Activated T-helper 2 cell treated with anti-CD3 and anti-CD28 coated beads, Interferon-gamma antibody, Interleukin-2, Interleukin-4, amounts not matched to agents 10 μg/mL and 5 μg/mL and 100 μg/mL, durations not matched to agents 14 hours and 24 hours and 36 hours (primary cell): ENCODE measurements at regions of chr1 and their contacts with region 1.

Region 1: GRCh38 chr1:246329900-246330299 is 177.2 kb downstream of the SMYD3 start:
- DNase-seq: peak; percentile 28
- H3K4me3 Mint-ChIP-seq: no peak overlapping the region
- H3K27ac Mint-ChIP-seq: peak overlapping the region; percentile 29
- H3K4me1 Mint-ChIP-seq: peaks cover 48% of the 10 kb centered on the region
- H3K27me3 Mint-ChIP-seq: no peaks in the 10 kb centered on the region

Region 2: GRCh38 chr1:246128494-246129069 is 201.3 kb before region 1 on chr1:
- intact Hi-C with region 1: loop called (anchors 10 kb)
- DNase-seq: no peak
- H3K4me3 Mint-ChIP-seq: no peak overlapping the region
- H3K27ac Mint-ChIP-seq: no peak overlapping the region
- H3K4me1 Mint-ChIP-seq: no peaks in the 10 kb centered on the region
- H3K27me3 Mint-ChIP-seq: no peaks in the 10 kb centered on the region

Region 3: DNA sequence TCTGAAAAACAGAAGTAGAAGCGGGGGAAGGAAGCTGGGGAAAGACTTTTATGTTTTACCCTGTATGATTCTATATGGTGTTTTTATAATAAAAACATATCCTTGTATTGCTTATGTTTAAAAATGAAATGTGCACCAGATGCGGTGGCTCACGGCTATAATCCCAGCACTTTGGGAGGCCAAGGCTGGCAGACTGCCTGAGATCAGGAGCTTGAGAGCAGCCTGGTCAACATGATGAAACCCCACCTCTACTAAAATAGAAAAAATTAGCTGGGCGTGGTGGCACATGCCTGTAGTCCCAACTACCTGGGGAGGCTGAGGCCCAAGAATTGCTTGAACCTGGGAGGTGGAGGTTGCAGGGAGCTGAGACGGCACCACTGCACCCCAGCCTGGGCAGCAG is 21.8 kb after region 1 on chr1:
- intact Hi-C with region 1: no loop called
- DNase-seq: no peak
- H3K4me3 Mint-ChIP-seq: no peak overlapping the region
- H3K27ac Mint-ChIP-seq: no peak overlapping the region
- H3K4me1 Mint-ChIP-seq: no peaks in the 10 kb centered on the region
- H3K27me3 Mint-ChIP-seq: no peaks in the 10 kb centered on the region

Region 4: GRCh38 chr1:246476771-246477170 is 146.9 kb after region 1 on chr1:
- intact Hi-C with region 1: loop called (anchors 1 kb)
- DNase-seq: no peak
- H3K4me3 Mint-ChIP-seq: no peak overlapping the region
- H3K27ac Mint-ChIP-seq: peak overlapping the region; percentile 55
- H3K4me1 Mint-ChIP-seq: peaks cover 29% of the 10 kb centered on the region
- H3K27me3 Mint-ChIP-seq: no peaks in the 10 kb centered on the region

Region 5: DNA sequence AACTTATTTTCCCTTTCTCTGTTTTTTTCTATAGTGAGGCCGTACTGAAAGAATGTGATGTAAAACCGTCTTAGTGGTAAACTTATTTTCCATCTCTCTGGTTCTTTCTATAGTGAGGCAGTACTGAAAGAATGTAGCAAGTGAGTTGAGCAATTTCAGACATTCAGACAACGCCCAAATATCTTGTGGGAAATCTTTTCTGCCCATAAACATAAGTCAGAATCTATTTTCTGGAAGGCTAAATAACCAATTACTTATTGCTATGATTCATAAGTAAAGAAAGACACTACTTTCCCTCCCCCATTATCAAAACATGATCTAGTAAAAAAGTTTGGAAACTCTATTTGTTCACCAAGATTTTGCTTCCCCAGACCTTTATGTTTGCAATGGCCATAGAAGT is 375.5 kb after region 1 on chr1:
- intact Hi-C with region 1: loop called (anchors 5 kb)
- DNase-seq: no peak
- H3K4me3 Mint-ChIP-seq: no peak overlapping the region
- H3K27ac Mint-ChIP-seq: no peak overlapping the region
- H3K4me1 Mint-ChIP-seq: peaks cover 13% of the 10 kb centered on the region
- H3K27me3 Mint-ChIP-seq: peaks cover 16% of the 10 kb centered on the region